ENCODE measurements at regions of chr10 and their contacts with region 1.

Region 1: DNA sequence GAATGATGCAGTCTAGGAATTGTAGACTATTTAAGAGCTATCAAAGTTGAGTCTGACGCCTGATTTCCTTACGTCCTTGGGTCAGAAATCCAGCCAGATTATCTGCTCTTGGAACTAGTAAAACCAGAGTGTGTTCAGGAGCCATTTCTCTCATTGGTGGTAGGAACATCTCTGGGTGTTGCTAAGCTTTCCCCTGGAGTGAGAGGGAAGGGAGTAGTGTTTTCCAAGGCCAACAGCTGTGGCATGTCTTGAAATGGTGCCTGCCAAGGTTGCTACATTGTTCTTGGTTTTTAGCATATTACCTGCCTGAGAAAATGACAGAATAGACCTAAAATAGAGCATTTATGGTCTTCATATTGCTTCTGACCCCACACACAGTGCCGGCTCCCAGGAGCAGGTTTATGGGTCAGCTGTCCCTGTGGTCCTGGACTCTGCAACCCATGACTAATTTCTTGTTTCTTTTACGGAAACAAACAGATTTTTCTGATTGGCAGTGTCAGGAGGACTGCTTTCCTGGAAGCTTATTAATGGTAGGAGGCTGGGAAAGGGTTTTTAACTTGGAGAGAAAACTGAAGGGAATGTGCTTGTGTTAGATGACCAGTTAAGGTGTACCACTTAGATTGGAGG is 17.5 kb downstream of the GBF1 start:
- DNase-seq: no peak
- H3K4me3 ChIP-seq: no peak overlapping the region
- H3K27ac ChIP-seq: no peak overlapping the region
- H3K4me1 ChIP-seq: peaks cover 7% of the 10 kb centered on the region
- H3K27me3 ChIP-seq: no peaks in the 10 kb centered on the region
- CTCF ChIP-seq: no peak

Region 2: DNA sequence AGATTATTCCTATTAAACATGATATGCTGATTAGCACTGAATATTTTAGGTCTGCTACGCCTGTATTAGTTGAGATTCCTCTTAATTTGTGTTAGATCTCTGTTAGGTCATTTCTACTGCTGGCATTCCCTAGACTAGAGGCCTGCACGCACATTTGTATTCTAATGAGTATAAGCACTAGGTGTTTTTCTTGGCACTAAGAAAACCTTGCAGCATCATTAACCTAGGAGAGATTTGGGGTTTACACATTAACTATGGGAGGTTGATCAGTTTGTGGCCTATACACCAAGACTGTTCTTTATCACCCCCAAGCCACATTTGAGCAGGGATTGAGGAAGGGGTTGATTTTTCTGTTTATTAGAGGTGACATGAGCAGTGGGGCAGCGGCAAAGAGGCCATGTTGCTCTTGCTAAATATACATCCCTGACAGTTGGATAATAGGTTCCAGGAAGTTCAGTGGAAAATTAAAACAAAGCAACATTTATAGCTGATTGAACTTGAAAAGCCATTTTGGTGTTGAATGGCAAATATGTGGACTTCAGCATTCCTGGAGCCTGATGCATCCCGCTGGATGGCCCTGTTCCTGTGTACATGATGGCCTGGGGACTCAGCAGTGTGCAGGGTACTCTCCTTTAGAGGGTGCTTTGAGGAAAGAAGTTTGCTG is 47.6 kb after region 1 on chr10:
- CTCF ChIA-PET with region 1: no interaction called
- dilution Hi-C with region 1: loop called (anchors 5 kb)
- in situ Hi-C with region 1: no loop called
- intact Hi-C with region 1: no loop called
- DNase-seq: peak; percentile 32
- H3K4me3 ChIP-seq: no peak overlapping the region
- H3K27ac ChIP-seq: peak overlapping the region; percentile 11
- H3K4me1 ChIP-seq: peaks cover 27% of the 10 kb centered on the region
- H3K27me3 ChIP-seq: no peaks in the 10 kb centered on the region
- CTCF ChIP-seq: no peak

Region 3: GRCh38 chr10:102342958-102343357 is 80.1 kb after region 1 on chr10:
- CTCF ChIA-PET with region 1: no interaction called
- dilution Hi-C with region 1: loop called (anchors 5 kb)
- in situ Hi-C with region 1: no loop called
- intact Hi-C with region 1: no loop called
- DNase-seq: peak; percentile 87
- H3K4me3 ChIP-seq: no peak overlapping the region
- H3K27ac ChIP-seq: peak overlapping the region; percentile 73
- H3K4me1 ChIP-seq: peaks cover 35% of the 10 kb centered on the region
- H3K27me3 ChIP-seq: no peaks in the 10 kb centered on the region
- CTCF ChIP-seq: no peak